ENCODE measurements at regions of chr11 and their contacts with region 1.

Region 1: DNA sequence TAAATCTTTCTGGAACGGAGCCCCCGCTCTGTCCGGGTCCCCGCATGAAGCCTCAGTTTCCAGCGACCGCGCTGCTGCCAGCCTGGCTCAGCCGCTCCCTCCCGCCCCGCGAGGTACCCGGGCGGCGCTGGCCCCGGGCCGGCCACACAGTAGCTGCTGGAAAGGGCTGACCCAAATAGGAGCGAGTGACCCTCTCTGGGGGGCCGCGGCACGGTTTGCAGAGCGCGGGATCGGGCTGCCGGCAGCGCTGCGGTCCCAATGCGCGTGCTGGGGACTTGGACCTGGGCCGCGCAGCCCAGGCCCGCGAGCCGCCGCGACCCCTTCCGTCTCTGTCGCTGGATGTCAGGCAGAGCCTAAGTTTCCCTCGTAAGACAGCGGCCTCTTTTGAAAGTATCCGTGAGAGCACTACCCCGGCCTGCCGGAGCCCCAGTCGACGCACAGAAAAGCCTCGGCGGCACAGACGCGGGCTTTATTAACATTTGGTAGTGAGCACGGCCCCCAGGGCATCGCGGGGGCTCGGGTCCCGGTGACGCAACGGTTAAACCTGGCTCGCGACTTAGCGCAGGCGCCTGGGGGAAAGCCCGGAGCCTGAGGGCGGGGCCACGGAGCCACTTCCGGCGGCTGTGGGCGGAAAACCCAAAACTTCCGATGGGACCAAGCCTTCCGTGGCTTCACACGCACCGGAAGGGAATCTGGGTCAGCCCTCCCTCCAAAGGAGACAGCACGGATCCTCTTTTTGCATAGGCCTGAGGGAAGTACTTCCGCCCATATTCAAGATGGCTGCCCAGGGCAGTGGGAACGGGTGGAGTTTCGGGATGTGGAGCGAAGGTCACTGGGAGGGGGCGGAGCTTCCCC is 14.9 kb downstream of the BAD start:
- H3K4me3 ChIP-seq: peak overlapping the region; percentile 70
- H3K27ac ChIP-seq: peak overlapping the region; percentile 83
- H3K4me1 ChIP-seq: 0 out of 2 replicates have a peak, but pooled peaks cover 2% of the 10 kb centered on the region
- CTCF ChIP-seq: 0 out of 2 replicates have a peak, but pooled peaks have one; percentile 25

Region 2: GRCh38 chr11:64284048-64284961 is 14.7 kb after region 1 on chr11 and contains the start of gene BAD:
- CTCF ChIA-PET with region 1: interaction called, 9 read pairs
- POLR2A ChIA-PET with region 1: interaction called, 41 read pairs
- H3K4me3 ChIP-seq: peak within 1 kb of the TSS; percentile 82
- H3K27ac ChIP-seq: peak within 1 kb of the TSS; percentile 86
- H3K4me1 ChIP-seq: no peaks in the 10 kb centered on the region; the same call in 1 of the 2 replicates
- CTCF ChIP-seq: no peak; the same call in 1 of the 2 replicates

Region 3: GRCh38 chr11:64566042-64566914 is 296.7 kb after region 1 on chr11:
- CTCF ChIA-PET with region 1: no interaction called
- POLR2A ChIA-PET with region 1: no interaction called
- H3K4me3 ChIP-seq: no peak overlapping the region
- H3K27ac ChIP-seq: peak overlapping the region; percentile 25; the same call in 1 of the 2 replicates
- H3K4me1 ChIP-seq: no peaks in the 10 kb centered on the region
- CTCF ChIP-seq: no peak